Caco-2 (cell line): ENCODE measurements at regions of chr15 and their contacts with region 1.

Region 1: DNA sequence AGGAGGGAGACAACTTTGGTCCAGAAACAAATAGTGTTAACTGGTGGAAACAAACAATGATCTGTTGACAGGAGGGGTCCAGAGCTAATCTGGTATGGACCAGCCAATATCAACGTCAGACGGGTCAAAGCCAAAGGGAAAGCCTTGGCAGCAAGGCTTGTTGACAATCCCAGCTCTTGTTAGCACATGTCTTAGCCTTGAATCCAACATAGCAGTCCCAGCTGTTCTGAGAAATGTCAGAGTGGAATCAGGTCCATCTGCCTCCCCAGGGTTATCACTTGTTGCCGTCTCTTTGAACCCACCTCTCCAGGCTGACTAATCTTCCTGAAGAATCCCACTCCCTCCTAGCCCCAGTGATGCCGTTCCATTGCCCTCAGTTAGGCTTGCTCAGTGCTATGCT is 404.6 kb upstream of the MCTP2 start:
- DNase-seq: no peak
- H3K4me3 ChIP-seq: no peak overlapping the region
- H3K4me3 Mint-ChIP-seq: no peak overlapping the region
- H3K27ac Mint-ChIP-seq: no peak overlapping the region
- H3K4me1 ChIP-seq: peaks cover 26% of the 10 kb centered on the region
- H3K4me1 Mint-ChIP-seq: peaks cover 10% of the 10 kb centered on the region
- H3K27me3 ChIP-seq: no peaks in the 10 kb centered on the region
- H3K27me3 Mint-ChIP-seq: no peaks in the 10 kb centered on the region
- CTCF ChIP-seq: no peak

Region 2: GRCh38 chr15:93852761-93853160 is 26.0 kb after region 1 on chr15:
- CTCF ChIA-PET with region 1: no interaction called
- POLR2A ChIA-PET with region 1: no interaction called
- intact Hi-C with region 1: no loop called
- DNase-seq: no peak
- H3K4me3 ChIP-seq: no peak overlapping the region
- H3K4me3 Mint-ChIP-seq: no peak overlapping the region
- H3K27ac Mint-ChIP-seq: no peak overlapping the region
- H3K4me1 ChIP-seq: no peaks in the 10 kb centered on the region
- H3K4me1 Mint-ChIP-seq: no peaks in the 10 kb centered on the region
- H3K27me3 ChIP-seq: no peaks in the 10 kb centered on the region
- H3K27me3 Mint-ChIP-seq: no peaks in the 10 kb centered on the region
- CTCF ChIP-seq: no peak

Region 3: DNA sequence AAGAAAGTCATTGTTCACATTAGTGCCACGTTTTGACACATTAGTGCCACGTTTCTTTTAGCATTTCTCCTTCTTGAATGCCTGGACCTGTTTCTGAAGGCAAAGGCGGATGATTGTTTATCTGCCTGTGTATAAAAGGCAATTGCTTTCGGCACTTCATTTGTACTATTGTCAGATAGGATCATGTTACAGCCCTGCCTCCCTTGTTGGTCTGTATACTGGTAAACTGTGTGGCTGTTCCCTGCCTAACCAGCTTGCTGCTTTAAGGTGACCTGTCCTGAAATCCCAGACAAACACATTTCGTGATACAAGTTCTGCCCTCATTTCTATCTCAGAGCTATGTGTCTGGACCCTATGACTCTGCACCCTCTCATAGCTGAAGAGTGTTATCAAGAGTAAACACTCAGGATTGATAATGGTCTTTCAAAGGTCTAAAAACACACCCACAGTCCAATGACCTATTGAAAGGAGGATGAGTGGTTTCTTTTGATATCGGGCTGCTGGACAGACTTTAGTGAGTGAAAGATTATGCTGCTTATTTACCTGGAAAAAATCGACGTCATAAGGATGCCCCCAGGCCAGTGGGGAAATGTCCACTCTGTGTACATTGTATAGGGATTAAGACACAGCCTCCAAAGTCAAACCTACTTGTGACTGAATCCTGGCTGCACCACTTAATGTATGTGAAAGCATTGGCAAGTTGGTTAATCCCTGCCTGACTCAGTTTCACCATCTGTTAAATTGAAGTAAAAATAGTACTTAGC is 128.4 kb after region 1 on chr15:
- CTCF ChIA-PET with region 1: no interaction called
- POLR2A ChIA-PET with region 1: no interaction called
- intact Hi-C with region 1: loop called (anchors 1 kb)
- DNase-seq: peak; percentile 84 to 85
- H3K4me3 ChIP-seq: no peak overlapping the region
- H3K4me3 Mint-ChIP-seq: peak overlapping the region; percentile 64
- H3K27ac Mint-ChIP-seq: peak overlapping the region; percentile 50
- H3K4me1 ChIP-seq: peaks cover 17% of the 10 kb centered on the region
- H3K4me1 Mint-ChIP-seq: peaks cover 21% of the 10 kb centered on the region
- H3K27me3 ChIP-seq: no peaks in the 10 kb centered on the region
- H3K27me3 Mint-ChIP-seq: no peaks in the 10 kb centered on the region
- CTCF ChIP-seq: no peak